B cell (primary cell): ENCODE measurements at regions of chr2 and their contacts with region 1.

Region 1: GRCh38 chr2:68709421-68709911 is 25.1 kb upstream of the ARHGAP25 start:
- DNase-seq: peak; percentile 67
- ATAC-seq: peak; percentile 56
- H3K4me3 ChIP-seq: no peak overlapping the region
- H3K4me3 Mint-ChIP-seq: peak overlapping the region; percentile 30
- H3K27ac ChIP-seq: no peak overlapping the region
- H3K27ac Mint-ChIP-seq: peak overlapping the region; percentile 33
- H3K4me1 ChIP-seq: peaks cover 22% of the 10 kb centered on the region in 2 donors
- H3K4me1 Mint-ChIP-seq: peaks cover 36% of the 10 kb centered on the region
- H3K27me3 ChIP-seq: no peaks in the 10 kb centered on the region
- H3K27me3 Mint-ChIP-seq: no peaks in the 10 kb centered on the region
- CTCF ChIP-seq: peak; percentile 79

Region 2: GRCh38 chr2:68689553-68690537 is 19.6 kb before region 1 on chr2:
- CTCF ChIA-PET with region 1: interaction called, 34 read pairs
- POLR2A ChIA-PET with region 1: no interaction called
- intact Hi-C with region 1: loop called (anchors 1 kb)
- DNase-seq: peak; percentile 80
- ATAC-seq: peak; percentile 81
- H3K4me3 ChIP-seq: peak overlapping the region in 4 of 5 experiments; percentile 8 to 50 (median 22)
- H3K4me3 Mint-ChIP-seq: peak overlapping the region; percentile 65
- H3K27ac ChIP-seq: peak overlapping the region; percentile 39 to 62
- H3K27ac Mint-ChIP-seq: peak overlapping the region; percentile 84
- H3K4me1 ChIP-seq: peaks cover 35 to 36% of the 10 kb centered on the region in 2 donors
- H3K4me1 Mint-ChIP-seq: peaks cover 40% of the 10 kb centered on the region
- H3K27me3 ChIP-seq: no peaks in the 10 kb centered on the region
- H3K27me3 Mint-ChIP-seq: no peaks in the 10 kb centered on the region
- CTCF ChIP-seq: no peak

Region 3: GRCh38 chr2:68734688-68735525 is 25.4 kb after region 1 on chr2 and contains the start of gene ARHGAP25:
- CTCF ChIA-PET with region 1: interaction called, 280 read pairs
- POLR2A ChIA-PET with region 1: interaction called, 3 read pairs
- intact Hi-C with region 1: loop called (anchors 1 kb)
- DNase-seq: peak; percentile 83
- ATAC-seq: peak; percentile 78
- H3K4me3 ChIP-seq: peak within 1 kb of the TSS; percentile 47 to 92 (median 64)
- H3K4me3 Mint-ChIP-seq: no peak within 1 kb of the TSS
- H3K27ac ChIP-seq: peak within 1 kb of the TSS; percentile 93
- H3K27ac Mint-ChIP-seq: no peak within 1 kb of the TSS
- H3K4me1 ChIP-seq: peaks cover 66 to 77% of the 10 kb centered on the region in 2 donors
- H3K4me1 Mint-ChIP-seq: peaks cover 55% of the 10 kb centered on the region
- H3K27me3 ChIP-seq: no peaks in the 10 kb centered on the region
- H3K27me3 Mint-ChIP-seq: no peaks in the 10 kb centered on the region
- CTCF ChIP-seq: no peak
- total RNA-seq, gene ARHGAP25: 207 and 221 TPM in 2 replicates

Region 4: GRCh38 chr2:68789603-68790002 is 80.1 kb after region 1 on chr2:
- CTCF ChIA-PET with region 1: interaction called, 27 read pairs
- POLR2A ChIA-PET with region 1: interaction called, 7 read pairs
- intact Hi-C with region 1: loop called (anchors 2 kb)
- DNase-seq: peak; percentile 96
- ATAC-seq: peak; percentile 89
- H3K4me3 ChIP-seq: peak overlapping the region in 1 of 5 experiments; percentile 27
- H3K4me3 Mint-ChIP-seq: peak overlapping the region; percentile 80
- H3K27ac ChIP-seq: peak overlapping the region; percentile 91 to 96
- H3K27ac Mint-ChIP-seq: peak overlapping the region; percentile 99
- H3K4me1 ChIP-seq: peaks cover 94 to 96% of the 10 kb centered on the region in 2 donors
- H3K4me1 Mint-ChIP-seq: peaks cover 55% of the 10 kb centered on the region
- H3K27me3 ChIP-seq: no peaks in the 10 kb centered on the region
- H3K27me3 Mint-ChIP-seq: no peaks in the 10 kb centered on the region
- CTCF ChIP-seq: no peak

Region 5: GRCh38 chr2:68909793-68910674 is 200.6 kb after region 1 on chr2:
- CTCF ChIA-PET with region 1: interaction called, 133 read pairs
- POLR2A ChIA-PET with region 1: interaction called, 3 read pairs
- intact Hi-C with region 1: loop called (anchors 1 kb)
- DNase-seq: peak; percentile 83
- ATAC-seq: peak; percentile 46
- H3K4me3 ChIP-seq: no peak overlapping the region
- H3K4me3 Mint-ChIP-seq: no peak overlapping the region
- H3K27ac ChIP-seq: no peak overlapping the region
- H3K27ac Mint-ChIP-seq: peak overlapping the region; percentile 62
- H3K4me1 ChIP-seq: peaks cover 24 to 29% of the 10 kb centered on the region in 2 donors
- H3K4me1 Mint-ChIP-seq: peaks cover 28% of the 10 kb centered on the region
- H3K27me3 ChIP-seq: no peaks in the 10 kb centered on the region
- H3K27me3 Mint-ChIP-seq: no peaks in the 10 kb centered on the region
- CTCF ChIP-seq: peak; percentile 95

Region 6: DNA sequence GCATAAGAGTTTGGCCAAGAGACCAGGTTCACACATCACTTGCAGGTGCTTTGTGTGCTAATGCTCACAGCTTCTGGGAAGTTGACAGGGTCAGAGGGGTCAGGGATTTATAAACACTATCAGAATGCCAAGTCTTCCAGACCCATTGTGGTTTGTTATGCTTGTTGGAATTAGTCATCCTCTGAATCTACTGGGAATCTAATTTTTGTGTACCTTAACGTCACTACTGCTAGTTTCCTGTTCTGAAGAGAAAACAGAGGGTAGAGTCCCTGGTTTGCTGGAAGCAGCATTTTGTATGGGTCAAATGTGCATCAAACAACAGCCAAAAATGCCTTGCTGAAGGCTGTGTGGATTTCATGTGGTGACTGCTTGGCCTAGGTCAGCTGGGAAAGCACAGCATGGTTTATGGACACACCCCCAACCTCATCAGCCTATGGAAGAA is 336.8 kb after region 1 on chr2:
- CTCF ChIA-PET with region 1: no interaction called
- POLR2A ChIA-PET with region 1: no interaction called
- intact Hi-C with region 1: no loop called
- DNase-seq: no peak
- ATAC-seq: no peak
- H3K4me3 ChIP-seq: no peak overlapping the region
- H3K4me3 Mint-ChIP-seq: no peak overlapping the region
- H3K27ac ChIP-seq: no peak overlapping the region
- H3K27ac Mint-ChIP-seq: no peak overlapping the region
- H3K4me1 ChIP-seq: no peaks in the 10 kb centered on the region
- H3K4me1 Mint-ChIP-seq: no peaks in the 10 kb centered on the region
- H3K27me3 ChIP-seq: peaks cover 0 to 9% (median 2%) of the 10 kb centered on the region in 4 experiments
- H3K27me3 Mint-ChIP-seq: peaks cover 15% of the 10 kb centered on the region
- CTCF ChIP-seq: no peak